Activated CD8-positive, alpha-beta memory T cell treated with anti-CD3 and anti-CD28 coated beads, Interleukin-2, amount 10 ng/mL, durations not matched to agents 7 days and 5 days (primary cell): ENCODE measurements at regions of chr2 and their contacts with region 1.

Region 1: GRCh38 chr2:42944779-42945415 is 152.5 kb upstream of the HAAO start:
- DNase-seq: no peak
- ATAC-seq: no peak
- H3K4me3 Mint-ChIP-seq: no peak overlapping the region
- H3K27ac Mint-ChIP-seq: no peak overlapping the region
- H3K4me1 Mint-ChIP-seq: peaks cover 4% of the 10 kb centered on the region
- H3K27me3 Mint-ChIP-seq: peaks cover 2% of the 10 kb centered on the region

Region 2: GRCh38 chr2:43542285-43542937 is 597.5 kb after region 1 on chr2:
- CTCF ChIA-PET with region 1: interaction called, 19 read pairs
- DNase-seq: no peak
- ATAC-seq: peak; percentile 71
- H3K4me3 Mint-ChIP-seq: no peak overlapping the region
- H3K27ac Mint-ChIP-seq: no peak overlapping the region
- H3K4me1 Mint-ChIP-seq: peaks cover 26% of the 10 kb centered on the region
- H3K27me3 Mint-ChIP-seq: no peaks in the 10 kb centered on the region